ENCODE measurements at regions of chr7 and their contacts with region 1.

Region 1: DNA sequence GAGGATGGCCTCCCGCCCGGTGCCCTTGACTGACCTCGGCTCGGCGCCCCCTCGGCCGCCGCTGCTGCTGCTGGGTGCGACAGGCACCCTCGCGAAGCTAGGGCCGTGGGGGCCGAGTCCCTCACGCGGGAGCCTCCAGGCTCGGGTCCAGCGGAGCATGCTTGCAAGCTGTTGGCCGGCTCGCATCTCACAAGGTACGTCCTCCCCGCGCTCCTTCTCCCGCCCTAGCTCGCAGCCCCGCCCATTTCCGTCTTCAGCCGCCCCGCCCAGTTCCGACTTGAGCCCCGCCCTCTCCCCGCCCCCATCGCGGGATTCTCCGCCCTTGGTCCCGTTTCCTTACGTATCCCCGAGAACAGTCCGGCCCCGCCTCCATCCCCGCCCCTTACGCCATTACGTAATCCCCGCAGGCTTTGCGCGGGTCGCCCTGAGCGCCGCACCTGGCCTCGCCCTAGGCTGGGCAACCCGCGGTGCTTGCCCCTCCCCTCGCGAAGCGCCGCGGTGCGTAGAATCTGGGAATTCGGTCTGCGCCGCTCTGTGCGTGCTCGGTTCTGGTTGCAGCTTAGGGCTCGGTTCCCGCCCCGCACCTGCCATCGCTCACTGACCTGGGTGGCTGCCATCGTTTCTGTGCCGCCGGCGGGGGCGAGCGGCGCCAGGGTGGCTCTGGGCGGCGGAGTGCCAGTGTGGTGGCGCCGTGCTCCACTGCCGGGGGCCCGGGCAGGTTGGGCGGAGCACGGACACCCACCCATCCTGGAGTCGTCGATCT is at the start of gene ABHD11:
- DNase-seq: peak; percentile 89 to 100
- H3K4me3 ChIP-seq: peak within 1 kb of the TSS; percentile 96
- H3K27ac ChIP-seq: peak within 1 kb of the TSS; percentile 100
- H3K4me1 ChIP-seq: peaks cover 71% of the 10 kb centered on the region
- H3K27me3 ChIP-seq: no peaks in the 10 kb centered on the region
- CTCF ChIP-seq: no peak
- total RNA-seq, gene ABHD11: 74.4 and 92.6 TPM in 2 replicates

Region 2: DNA sequence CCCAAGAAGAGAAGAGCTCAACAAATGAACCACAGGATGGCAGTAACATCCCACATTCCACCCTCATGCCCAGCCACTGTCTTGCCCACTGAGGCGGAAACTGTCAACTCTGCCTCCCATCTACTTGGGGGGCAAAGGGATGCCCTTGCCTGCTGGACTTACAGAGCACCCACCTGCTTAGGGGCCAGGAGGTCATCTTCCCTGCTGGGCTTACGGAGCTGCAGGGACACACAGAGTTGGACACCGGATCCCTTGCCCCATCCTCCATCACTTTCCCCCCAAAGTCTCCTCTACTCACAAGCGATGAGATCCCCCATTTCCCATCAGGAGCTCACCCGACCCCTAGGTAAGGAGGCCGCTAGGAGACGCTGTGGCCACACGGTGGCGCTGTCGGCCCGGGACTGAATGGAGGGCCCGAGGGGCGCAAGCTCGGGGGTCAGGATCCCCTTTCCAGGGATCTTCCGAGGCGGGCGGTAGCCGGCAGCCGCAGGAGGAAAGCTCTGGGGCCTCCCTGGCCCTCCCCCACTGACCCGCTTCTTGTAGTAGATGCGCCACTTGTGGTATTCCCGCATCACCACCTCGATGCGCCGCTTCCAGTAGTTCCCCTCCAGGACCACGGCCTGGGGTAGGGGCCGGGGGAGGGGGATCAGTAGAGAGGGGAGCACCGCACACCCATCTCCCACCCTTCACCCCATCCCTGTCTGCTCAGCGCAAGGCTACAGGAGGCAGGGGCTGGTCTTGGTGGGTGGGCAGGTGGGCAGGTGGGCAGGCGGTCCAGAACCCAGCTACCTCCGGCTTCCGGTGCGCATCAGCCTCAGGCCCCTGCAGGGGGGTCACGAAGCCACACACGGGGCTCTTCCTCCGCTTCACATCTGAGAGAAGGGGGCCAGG is 131.7 kb before region 1 on chr7:
- CTCF ChIA-PET with region 1: interaction called, 5 read pairs
- POLR2A ChIA-PET with region 1: interaction called, 13 read pairs
- intact Hi-C with region 1: no loop called
- DNase-seq: peak in 1 of 2 experiments; percentile 59
- H3K4me3 ChIP-seq: no peak overlapping the region
- H3K27ac ChIP-seq: no peak overlapping the region
- H3K4me1 ChIP-seq: peaks cover 22% of the 10 kb centered on the region
- H3K27me3 ChIP-seq: no peaks in the 10 kb centered on the region
- CTCF ChIP-seq: peak; percentile 95

Region 3: DNA sequence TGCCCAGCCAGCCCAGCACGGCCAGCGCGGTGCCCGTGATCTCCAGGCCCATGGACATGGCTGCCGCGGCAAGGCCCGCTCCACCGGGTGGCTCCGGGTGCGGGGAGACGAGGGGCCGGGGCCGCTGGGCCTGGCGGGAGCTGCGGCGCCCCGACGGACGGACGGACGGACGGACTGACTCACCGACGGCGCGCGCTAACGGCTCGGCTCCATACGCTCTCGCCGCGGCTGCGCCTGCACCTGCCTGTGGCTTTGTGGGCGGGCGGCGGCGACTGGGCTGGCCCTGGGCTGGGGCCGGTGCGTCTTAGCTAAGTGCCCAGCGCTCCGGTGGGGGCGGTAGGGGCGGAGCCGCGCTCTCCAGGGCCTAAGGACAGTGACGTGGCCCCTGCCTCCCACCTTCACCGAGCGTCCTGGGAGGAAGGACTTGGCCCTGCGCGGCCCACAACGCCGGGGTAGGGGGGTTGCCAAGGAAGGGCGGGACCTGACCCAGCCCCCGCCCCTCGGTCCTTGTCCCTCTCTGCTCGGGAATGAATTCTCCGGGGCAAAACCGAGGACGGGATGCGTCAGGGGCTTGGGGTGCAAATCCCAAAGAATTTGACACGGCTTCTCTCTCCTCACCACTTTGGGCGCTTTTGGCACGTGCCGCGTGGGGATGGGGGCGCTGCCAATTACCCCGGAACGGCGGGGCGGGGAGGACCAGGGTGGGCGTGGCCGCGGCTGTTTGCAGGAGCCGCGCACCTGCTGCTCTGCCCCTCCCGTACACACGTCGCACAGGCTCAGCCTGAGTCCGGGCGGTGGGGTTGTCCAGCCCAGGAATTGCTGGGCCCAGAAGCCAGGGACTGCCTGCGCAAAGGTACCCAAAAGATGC is 31.4 kb after region 1 on chr7 and contains the start of gene CLDN3:
- CTCF ChIA-PET with region 1: interaction called, 5 read pairs
- POLR2A ChIA-PET with region 1: interaction called, 11 read pairs
- intact Hi-C with region 1: loop called (anchors 1 kb)
- DNase-seq: peak; percentile 83 to 97
- H3K4me3 ChIP-seq: peak within 1 kb of the TSS; percentile 66; the same call in 1 of the 2 replicates
- H3K27ac ChIP-seq: peak within 1 kb of the TSS; percentile 58
- H3K4me1 ChIP-seq: peaks cover 23% of the 10 kb centered on the region
- H3K27me3 ChIP-seq: no peaks in the 10 kb centered on the region
- CTCF ChIP-seq: no peak
- total RNA-seq, gene CLDN3: 31.3 and 45.2 TPM in 2 replicates

Region 4: GRCh38 chr7:73811760-73812168 is 73.0 kb after region 1 on chr7:
- CTCF ChIA-PET with region 1: interaction called, 4 read pairs
- POLR2A ChIA-PET with region 1: interaction called, 20 read pairs
- intact Hi-C with region 1: loop called (anchors 1 kb)
- DNase-seq: peak; percentile 55 to 75
- H3K4me3 ChIP-seq: no peak overlapping the region
- H3K27ac ChIP-seq: no peak overlapping the region
- H3K4me1 ChIP-seq: peaks cover 22% of the 10 kb centered on the region
- H3K27me3 ChIP-seq: no peaks in the 10 kb centered on the region
- CTCF ChIP-seq: peak; percentile 89

Region 5: GRCh38 chr7:73833312-73833919 is 94.6 kb after region 1 on chr7:
- CTCF ChIA-PET with region 1: interaction called, 5 read pairs
- POLR2A ChIA-PET with region 1: interaction called, 80 read pairs
- intact Hi-C with region 1: loop called (anchors 1 kb)
- DNase-seq: peak; percentile 80 to 85
- H3K4me3 ChIP-seq: peak overlapping the region; percentile 97; the same call in 1 of the 2 replicates
- H3K27ac ChIP-seq: peak overlapping the region; percentile 99
- H3K4me1 ChIP-seq: peaks cover 26% of the 10 kb centered on the region
- H3K27me3 ChIP-seq: no peaks in the 10 kb centered on the region
- CTCF ChIP-seq: no peak

Region 6: DNA sequence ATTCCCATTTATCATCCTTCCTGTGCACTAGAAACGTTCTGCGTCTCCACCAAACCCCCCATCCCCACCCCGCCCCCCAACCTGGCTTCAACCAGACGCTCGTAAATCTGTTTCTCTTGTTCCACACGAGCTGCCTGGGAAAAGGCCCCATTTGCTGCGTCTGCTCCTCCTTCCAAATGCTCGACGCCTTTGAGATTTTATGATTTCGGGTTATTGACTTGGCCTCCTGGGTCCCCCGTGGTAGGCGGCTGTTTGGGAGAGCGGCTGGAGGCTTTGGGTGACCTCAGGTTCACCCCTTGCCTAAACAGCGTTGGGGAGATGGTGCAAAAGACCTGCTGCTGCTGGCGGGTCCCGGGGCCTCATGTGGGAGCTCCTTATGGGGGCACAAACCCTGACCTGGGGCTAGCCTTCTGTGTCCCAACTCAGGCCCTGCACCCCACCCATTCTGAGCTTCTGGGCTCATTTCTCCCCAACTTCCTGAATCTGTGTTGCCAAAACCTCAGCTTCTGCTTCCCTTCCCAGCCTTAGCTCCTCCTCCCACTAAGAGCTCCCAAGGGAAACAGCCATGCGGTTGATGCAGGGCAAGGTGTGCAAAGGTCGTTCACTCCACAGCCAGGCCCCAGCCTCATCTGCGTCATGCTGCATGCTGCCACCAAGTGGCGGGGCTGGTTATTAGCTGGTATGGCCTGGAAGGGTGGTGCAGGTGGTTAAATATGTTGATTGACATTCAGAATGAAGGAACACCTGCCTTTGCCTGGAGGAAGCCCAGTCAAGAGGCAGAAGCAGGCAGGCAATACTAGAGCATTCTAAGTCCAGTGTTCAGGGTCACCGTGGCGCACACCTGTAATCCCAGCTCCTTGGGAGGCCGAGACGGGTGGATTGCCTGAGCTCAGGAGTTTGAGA is 240.1 kb after region 1 on chr7:
- CTCF ChIA-PET with region 1: no interaction called
- POLR2A ChIA-PET with region 1: interaction called, 8 read pairs
- intact Hi-C with region 1: loop called (anchors 10 kb)
- DNase-seq: peak; percentile 90 to 91
- H3K4me3 ChIP-seq: no peak overlapping the region
- H3K27ac ChIP-seq: peak overlapping the region; percentile 33; the same call in 1 of the 2 replicates
- H3K4me1 ChIP-seq: peaks cover 11% of the 10 kb centered on the region
- H3K27me3 ChIP-seq: no peaks in the 10 kb centered on the region
- CTCF ChIP-seq: peak; percentile 74